GM18951 (cell line): ENCODE measurements at regions of chr4 and their contacts with region 1.

Region 1: DNA sequence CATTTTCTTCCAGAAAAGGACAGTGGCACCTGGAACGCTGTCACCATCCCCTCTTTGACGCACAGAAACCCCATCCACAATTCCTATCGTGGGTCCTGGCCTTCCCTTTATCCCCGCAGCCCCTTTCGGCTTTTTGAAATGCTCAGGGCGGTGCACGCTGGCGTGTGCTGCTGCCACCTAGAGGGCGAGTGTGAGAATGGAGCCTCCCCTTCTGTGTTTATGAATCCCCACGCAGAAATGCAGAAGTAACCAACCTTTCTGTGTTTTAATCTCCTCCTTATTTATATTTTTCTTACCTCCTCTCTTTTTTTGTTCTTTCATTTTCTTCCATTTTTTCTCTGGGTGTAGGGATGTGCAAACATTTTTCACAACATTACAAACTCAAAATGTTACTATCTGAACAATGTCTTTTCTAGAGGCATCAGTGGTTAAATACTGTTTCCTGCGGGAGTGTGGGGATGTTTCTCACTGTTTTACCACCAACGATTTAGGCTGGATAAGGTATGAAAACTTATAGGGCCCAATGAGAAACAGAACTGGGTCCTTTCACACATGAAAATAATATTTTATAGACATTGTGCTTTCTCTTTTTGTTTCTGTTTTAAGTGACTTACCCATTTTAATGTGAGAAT is 50.0 kb downstream of the TMA16 start:
- POLR2A ChIP-seq: no peak

Region 2: DNA sequence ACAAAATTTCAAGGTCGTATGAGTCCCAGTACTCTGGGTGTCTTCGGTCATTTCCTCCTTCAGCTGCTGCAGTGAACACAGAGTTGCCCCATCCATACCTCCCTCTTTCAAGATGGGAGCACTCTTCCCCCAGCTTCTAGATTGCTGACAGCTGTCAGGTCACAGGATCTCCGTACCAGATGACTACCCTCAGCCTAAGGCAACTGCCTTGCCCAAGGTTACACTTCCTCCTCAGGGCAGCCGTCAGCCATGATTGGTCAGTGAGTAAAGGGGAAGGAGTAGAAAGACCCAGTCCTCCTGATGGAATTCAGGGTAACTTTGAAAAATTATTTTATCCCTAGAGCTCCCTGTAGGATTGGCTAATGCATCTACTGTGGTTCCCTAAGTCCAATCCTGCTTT is 459.4 kb before region 1 on chr4:
- in situ Hi-C with region 1: no loop called
- POLR2A ChIP-seq: no peak

Region 3: GRCh38 chr4:163107754-163108153 is 436.8 kb before region 1 on chr4:
- in situ Hi-C with region 1: loop called (anchors 25 kb)
- POLR2A ChIP-seq: no peak

Region 4: GRCh38 chr4:163484906-163485305 is 59.6 kb before region 1 on chr4:
- in situ Hi-C with region 1: loop called (anchors 5 kb)
- POLR2A ChIP-seq: no peak

Region 5: DNA sequence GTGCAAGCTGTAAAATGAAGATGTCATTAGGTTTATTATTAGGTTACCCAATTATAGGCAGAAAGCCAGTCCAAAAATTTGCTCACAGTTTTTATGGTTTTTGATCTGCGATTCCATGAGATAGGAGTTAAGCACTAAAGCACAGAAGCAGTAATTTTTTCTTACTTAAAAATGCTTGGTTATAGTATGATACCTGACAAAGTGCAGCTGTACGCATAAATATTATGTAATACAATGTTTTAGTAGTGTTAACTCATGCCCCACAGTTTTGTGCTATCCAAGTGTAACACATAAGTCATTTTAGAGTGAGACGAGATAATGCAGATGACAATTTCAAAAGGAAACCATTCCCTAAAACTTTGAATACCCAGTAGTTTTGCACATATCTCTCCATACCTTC is 307.7 kb after region 1 on chr4:
- in situ Hi-C with region 1: no loop called
- POLR2A ChIP-seq: no peak